CD4-positive, alpha-beta T cell (primary cell): ENCODE measurements at regions of chr1 and their contacts with region 1.

Region 1: DNA sequence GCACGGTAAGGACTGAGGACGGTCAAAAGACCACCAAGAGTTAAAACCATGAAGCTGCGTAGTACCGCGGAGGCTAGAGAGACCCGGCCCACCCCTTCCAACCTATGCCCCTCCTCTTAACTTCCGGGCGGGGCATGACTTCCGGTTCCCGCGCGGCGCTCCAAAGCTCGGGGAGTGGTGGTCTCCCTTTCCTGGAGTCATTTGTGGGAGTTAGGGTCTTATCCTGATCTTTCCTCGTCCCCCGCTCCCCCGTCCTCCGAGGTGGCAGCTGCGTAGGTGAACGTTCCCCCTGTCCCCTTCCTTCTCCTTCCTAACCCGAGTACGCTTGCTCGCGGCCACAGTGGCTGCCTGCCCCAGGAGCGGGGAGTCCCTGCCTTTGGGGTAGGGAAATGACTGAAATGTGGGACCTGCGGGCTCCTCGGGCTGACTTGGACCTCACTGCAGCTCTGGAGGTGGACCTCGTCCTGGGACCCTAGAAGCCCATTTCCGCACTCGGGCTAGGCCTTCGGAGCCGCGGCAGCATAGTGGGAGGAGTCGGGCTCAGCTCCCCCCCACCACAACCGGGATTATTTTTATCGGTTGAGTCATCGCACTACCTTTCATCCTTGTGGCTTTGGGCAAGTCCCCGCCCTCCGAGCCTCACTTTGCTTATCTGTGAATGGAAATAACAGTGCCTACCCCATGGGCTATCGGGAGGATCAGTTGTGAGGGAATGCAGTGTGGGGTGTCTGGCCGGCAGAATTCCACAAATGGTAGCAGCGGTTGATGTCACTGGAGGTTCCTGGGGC is 24.1 kb downstream of the CELA3A start:
- DNase-seq: peak; percentile 80 to 97 (median 85)
- ATAC-seq: peak; percentile 67
- H3K4me3 ChIP-seq: peak overlapping the region; percentile 100
- H3K4me3 Mint-ChIP-seq: peak overlapping the region; percentile 96
- H3K27ac ChIP-seq: peak overlapping the region; percentile 100
- H3K27ac Mint-ChIP-seq: peak overlapping the region; percentile 93
- H3K4me1 ChIP-seq: peaks cover 57% of the 10 kb centered on the region
- H3K4me1 Mint-ChIP-seq: peaks cover 52% of the 10 kb centered on the region
- H3K27me3 ChIP-seq: no peaks in the 10 kb centered on the region
- H3K27me3 Mint-ChIP-seq: no peaks in the 10 kb centered on the region
- CTCF ChIP-seq: no peak

Region 2: DNA sequence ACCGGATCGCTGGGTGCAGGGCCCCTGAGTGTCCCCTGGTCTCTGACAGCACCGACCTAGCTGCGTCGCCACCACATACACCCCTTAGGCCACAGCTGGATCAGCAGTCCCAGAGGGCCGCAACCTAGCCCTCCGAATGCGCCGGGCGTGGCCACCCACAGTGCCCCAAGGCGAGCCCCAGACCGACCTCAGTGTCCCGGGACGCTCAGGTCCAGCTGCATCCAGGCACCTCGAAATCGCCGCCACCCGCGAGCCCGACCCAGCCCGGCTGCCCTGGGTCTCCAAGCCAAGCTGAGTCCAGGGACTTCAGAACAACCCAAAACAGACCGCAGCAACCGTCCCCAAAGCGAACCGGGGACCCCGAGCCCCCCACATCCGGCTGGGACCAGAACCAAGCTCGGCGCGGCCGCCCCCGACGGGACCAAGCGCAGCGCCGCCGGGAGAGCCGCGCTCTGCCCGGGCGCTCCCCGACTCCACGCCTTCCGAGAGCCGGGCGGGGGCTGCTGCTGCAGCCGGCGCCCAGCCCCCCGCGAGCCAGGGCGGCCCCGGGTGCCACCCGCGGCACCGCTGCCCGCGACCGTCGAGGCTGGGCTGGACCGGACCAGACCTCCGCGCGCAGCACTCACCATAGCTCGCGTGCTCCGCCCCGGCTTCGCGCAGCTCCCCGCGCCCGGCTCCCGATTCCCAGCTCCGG is 680.7 kb before region 1 on chr1:
- CTCF ChIA-PET with region 1: no interaction called
- POLR2A ChIA-PET with region 1: no interaction called
- intact Hi-C with region 1: loop called in 1 of 2 experiments (anchors 10 kb)
- DNase-seq: peak in 1 of 14 experiments; percentile 42
- ATAC-seq: peak; percentile 16
- H3K4me3 ChIP-seq: peak overlapping the region; percentile 91
- H3K4me3 Mint-ChIP-seq: peak overlapping the region; percentile 89
- H3K27ac ChIP-seq: no peak overlapping the region
- H3K27ac Mint-ChIP-seq: peak overlapping the region; percentile 86
- H3K4me1 ChIP-seq: peaks cover 63% of the 10 kb centered on the region
- H3K4me1 Mint-ChIP-seq: peaks cover 47% of the 10 kb centered on the region
- H3K27me3 ChIP-seq: no peaks in the 10 kb centered on the region
- H3K27me3 Mint-ChIP-seq: no peaks in the 10 kb centered on the region
- CTCF ChIP-seq: no peak

Region 3: GRCh38 chr1:21703318-21703963 is 322.1 kb before region 1 on chr1:
- CTCF ChIA-PET with region 1: interaction called, 3 read pairs
- POLR2A ChIA-PET with region 1: interaction called, 3 read pairs
- intact Hi-C with region 1: loop called in 1 of 2 experiments (anchors 5 kb)
- DNase-seq: peak in 3 of 14 experiments; percentile 14 to 28 (median 22)
- ATAC-seq: no peak
- H3K4me3 ChIP-seq: no peak overlapping the region
- H3K4me3 Mint-ChIP-seq: no peak overlapping the region
- H3K27ac ChIP-seq: no peak overlapping the region
- H3K27ac Mint-ChIP-seq: no peak overlapping the region
- H3K4me1 ChIP-seq: no peaks in the 10 kb centered on the region
- H3K4me1 Mint-ChIP-seq: no peaks in the 10 kb centered on the region
- H3K27me3 ChIP-seq: no peaks in the 10 kb centered on the region
- H3K27me3 Mint-ChIP-seq: no peaks in the 10 kb centered on the region
- CTCF ChIP-seq: no peak

Region 4: DNA sequence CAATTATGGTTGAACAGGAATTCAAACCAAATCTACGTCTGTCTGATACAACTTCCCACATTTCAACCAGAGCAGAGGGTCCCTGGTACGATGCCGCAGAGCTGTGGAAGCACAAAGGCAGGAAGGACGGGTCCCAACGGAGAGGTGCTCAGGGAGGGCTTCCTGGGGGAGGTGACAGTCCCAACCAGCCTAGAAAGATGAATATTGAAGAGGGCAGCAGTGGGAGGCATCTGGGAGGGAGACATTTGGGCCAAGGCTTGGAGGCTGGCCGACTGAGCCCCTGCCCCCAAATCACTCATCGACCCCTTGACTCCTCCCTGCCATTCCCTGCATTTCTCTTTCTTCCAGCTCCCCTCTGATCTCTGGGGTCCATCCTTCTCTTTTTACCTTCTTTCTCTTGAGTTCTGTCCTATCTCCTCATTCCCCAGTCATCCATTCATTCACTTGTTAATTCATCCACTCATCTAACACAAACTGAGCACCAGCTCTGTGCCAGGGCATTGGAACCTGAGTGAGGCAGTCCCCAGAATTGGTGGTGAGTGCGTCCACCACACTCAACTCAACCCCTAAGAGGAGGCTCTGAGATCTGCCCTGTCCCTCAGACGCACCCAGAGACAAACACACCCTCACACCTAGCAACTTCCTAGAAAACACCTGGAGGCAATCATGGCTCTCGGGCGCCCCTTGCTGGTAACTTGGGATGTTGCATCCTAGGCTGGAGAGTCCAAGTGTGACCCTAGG is 61.9 kb before region 1 on chr1:
- CTCF ChIA-PET with region 1: no interaction called
- POLR2A ChIA-PET with region 1: interaction called, 10 read pairs
- intact Hi-C with region 1: loop called (anchors 5 to 10 kb)
- DNase-seq: peak; percentile 70 to 90 (median 82)
- ATAC-seq: peak; percentile 98
- H3K4me3 ChIP-seq: no peak overlapping the region
- H3K4me3 Mint-ChIP-seq: no peak overlapping the region
- H3K27ac ChIP-seq: no peak overlapping the region
- H3K27ac Mint-ChIP-seq: peak overlapping the region; percentile 25
- H3K4me1 ChIP-seq: peaks cover 10% of the 10 kb centered on the region
- H3K4me1 Mint-ChIP-seq: peaks cover 21% of the 10 kb centered on the region
- H3K27me3 ChIP-seq: no peaks in the 10 kb centered on the region
- H3K27me3 Mint-ChIP-seq: peaks cover 2% of the 10 kb centered on the region
- CTCF ChIP-seq: peak; percentile 96

Region 5: DNA sequence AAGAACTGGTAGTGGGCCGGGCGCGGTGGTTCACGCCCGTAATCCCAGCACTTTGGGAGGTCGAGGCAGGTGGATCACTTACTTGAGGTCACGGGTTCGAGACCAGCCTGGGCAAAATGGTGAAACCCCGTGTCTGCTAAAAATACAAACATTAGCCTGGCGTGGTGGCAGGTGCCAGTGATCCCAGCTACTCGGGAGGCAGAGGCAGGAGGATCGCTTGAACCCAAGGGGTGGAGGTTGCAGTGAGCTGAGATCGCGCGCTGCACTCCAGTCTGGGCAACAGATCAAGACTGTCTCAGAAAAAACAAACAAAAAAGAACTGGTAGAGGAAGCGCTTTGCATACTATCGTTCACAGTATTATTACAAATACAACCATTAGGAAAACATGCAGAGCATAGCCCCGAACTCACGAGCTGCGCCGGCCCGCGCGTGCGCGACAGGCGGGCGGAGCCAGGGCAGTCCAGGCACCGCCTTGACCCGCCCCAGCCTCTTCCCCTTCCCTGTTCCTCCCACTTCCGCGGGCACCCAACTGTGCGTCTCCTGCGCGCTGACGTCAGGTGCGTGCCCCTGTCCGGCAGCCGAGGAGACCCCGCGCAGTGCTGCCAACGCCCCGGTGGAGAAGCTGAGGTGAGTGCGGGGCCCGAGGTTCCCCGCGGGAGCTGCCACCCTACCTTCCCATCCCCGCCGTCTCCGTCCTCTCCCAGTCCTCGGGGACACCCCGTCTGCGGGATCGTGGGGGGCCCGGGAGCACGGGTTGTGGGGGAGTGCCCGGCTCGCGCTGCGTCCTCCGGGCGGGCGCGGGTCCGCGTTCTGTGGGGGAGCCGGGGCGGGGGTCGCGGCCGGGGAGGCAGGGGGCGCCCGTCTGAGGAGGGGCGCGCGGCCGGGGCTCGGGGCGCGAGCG is 26.8 kb after region 1 on chr1 and contains the start of gene CDC42:
- CTCF ChIA-PET with region 1: interaction called, 64 read pairs
- POLR2A ChIA-PET with region 1: interaction called, 618 read pairs
- intact Hi-C with region 1: loop called (anchors 1 kb)
- DNase-seq: peak; percentile 96 to 99 (median 97)
- ATAC-seq: peak; percentile 88
- H3K4me3 ChIP-seq: peak within 1 kb of the TSS; percentile 88
- H3K4me3 Mint-ChIP-seq: peak within 1 kb of the TSS; percentile 99
- H3K27ac ChIP-seq: peak within 1 kb of the TSS; percentile 96 to 97
- H3K27ac Mint-ChIP-seq: peak within 1 kb of the TSS; percentile 98
- H3K4me1 ChIP-seq: peaks cover 50% of the 10 kb centered on the region
- H3K4me1 Mint-ChIP-seq: peaks cover 70% of the 10 kb centered on the region
- H3K27me3 ChIP-seq: no peaks in the 10 kb centered on the region
- H3K27me3 Mint-ChIP-seq: no peaks in the 10 kb centered on the region
- CTCF ChIP-seq: no peak
- total RNA-seq, gene CDC42: 375 to 379 TPM

Region 6: GRCh38 chr1:22080191-22080590 is 54.6 kb after region 1 on chr1:
- CTCF ChIA-PET with region 1: interaction called, 4 read pairs
- POLR2A ChIA-PET with region 1: interaction called, 12 read pairs
- intact Hi-C with region 1: loop called in 1 of 2 experiments (anchors 5 kb)
- DNase-seq: no peak
- ATAC-seq: no peak
- H3K4me3 ChIP-seq: no peak overlapping the region
- H3K4me3 Mint-ChIP-seq: peak overlapping the region; percentile 22
- H3K27ac ChIP-seq: no peak overlapping the region
- H3K27ac Mint-ChIP-seq: peak overlapping the region; percentile 83
- H3K4me1 ChIP-seq: peaks cover 48% of the 10 kb centered on the region
- H3K4me1 Mint-ChIP-seq: peaks cover 88% of the 10 kb centered on the region
- H3K27me3 ChIP-seq: no peaks in the 10 kb centered on the region
- H3K27me3 Mint-ChIP-seq: no peaks in the 10 kb centered on the region
- CTCF ChIP-seq: no peak

Region 7: DNA sequence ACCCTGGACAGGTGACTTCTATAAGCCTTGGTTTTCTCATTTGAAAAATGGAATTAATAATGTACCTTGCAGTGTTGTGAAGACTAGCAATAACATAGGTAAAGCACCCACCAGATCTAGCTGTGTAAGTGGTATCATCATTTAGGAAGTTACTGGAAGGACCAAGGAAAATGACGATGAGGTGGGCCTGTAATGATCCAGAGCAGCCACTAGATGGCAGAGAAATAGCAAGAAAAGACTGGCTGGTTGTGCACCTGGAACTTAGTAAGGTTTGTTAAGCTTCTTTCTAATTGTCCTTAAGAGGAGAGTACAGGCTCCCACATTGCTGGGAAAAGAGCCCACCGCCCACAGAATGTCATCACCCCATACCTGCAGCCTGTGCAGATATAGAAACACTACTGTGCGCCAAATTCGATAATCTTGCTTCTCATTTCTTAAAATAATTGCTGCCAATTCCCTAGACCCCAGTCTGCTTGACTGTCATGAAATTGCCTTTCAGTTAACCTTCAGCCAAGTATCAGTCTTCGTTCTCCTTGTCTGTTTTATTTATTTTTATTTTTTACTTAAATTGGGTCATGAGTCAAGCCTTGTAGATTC is 80.1 kb after region 1 on chr1:
- CTCF ChIA-PET with region 1: interaction called, 18 read pairs
- POLR2A ChIA-PET with region 1: interaction called, 26 read pairs
- intact Hi-C with region 1: no loop called
- DNase-seq: peak in 5 of 14 experiments; percentile 16 to 72 (median 61)
- ATAC-seq: peak; percentile 68
- H3K4me3 ChIP-seq: no peak overlapping the region
- H3K4me3 Mint-ChIP-seq: peak overlapping the region; percentile 64
- H3K27ac ChIP-seq: peak overlapping the region in 1 of 2 donors; percentile 8
- H3K27ac Mint-ChIP-seq: peak overlapping the region; percentile 77
- H3K4me1 ChIP-seq: peaks cover 43% of the 10 kb centered on the region
- H3K4me1 Mint-ChIP-seq: peaks cover 74% of the 10 kb centered on the region
- H3K27me3 ChIP-seq: no peaks in the 10 kb centered on the region
- H3K27me3 Mint-ChIP-seq: no peaks in the 10 kb centered on the region
- CTCF ChIP-seq: peak; percentile 85

Region 8: DNA sequence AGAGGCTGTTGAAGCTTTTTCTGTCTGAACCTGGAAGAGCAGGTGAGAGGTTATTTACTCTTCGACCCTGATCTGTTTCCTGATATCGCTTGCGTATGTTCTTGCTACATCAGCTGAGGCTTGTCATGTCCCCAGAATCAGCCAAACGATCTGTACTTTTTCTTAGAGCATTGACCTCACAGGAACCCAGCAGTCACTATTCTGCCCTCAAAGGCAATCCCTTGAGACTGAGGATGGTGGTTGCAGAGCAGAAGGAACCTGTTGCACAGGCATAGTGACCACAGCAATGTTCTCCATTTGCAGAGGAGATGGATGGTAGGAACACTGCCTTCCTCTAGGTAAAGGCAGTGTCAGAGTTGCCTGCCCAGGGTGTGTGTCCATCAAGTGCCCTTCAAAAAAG is 958.4 kb after region 1 on chr1:
- CTCF ChIA-PET with region 1: no interaction called
- POLR2A ChIA-PET with region 1: no interaction called
- intact Hi-C with region 1: no loop called
- DNase-seq: no peak
- ATAC-seq: no peak
- H3K4me3 ChIP-seq: no peak overlapping the region
- H3K4me3 Mint-ChIP-seq: no peak overlapping the region
- H3K27ac ChIP-seq: no peak overlapping the region
- H3K27ac Mint-ChIP-seq: no peak overlapping the region
- H3K4me1 ChIP-seq: no peaks in the 10 kb centered on the region
- H3K4me1 Mint-ChIP-seq: no peaks in the 10 kb centered on the region
- H3K27me3 ChIP-seq: peaks cover 0 to 3% of the 10 kb centered on the region in 2 experiments
- H3K27me3 Mint-ChIP-seq: peaks cover 32% of the 10 kb centered on the region
- CTCF ChIP-seq: no peak